Activated CD4-positive, alpha-beta T cell treated with anti-CD3 and anti-CD28 coated beads for 36 hours (primary cell): ENCODE measurements at regions of chrX and their contacts with region 1.

Region 1: GRCh38 chrX:70454441-70455365 is 10.1 kb downstream of the DLG3 start:
- DNase-seq: peak; percentile 82
- ATAC-seq: peak; percentile 65
- H3K4me3 Mint-ChIP-seq: peak overlapping the region; percentile 80
- H3K27ac Mint-ChIP-seq: peak overlapping the region; percentile 87
- H3K4me1 Mint-ChIP-seq: peaks cover 26% of the 10 kb centered on the region
- H3K27me3 Mint-ChIP-seq: no peaks in the 10 kb centered on the region

Region 2: DNA sequence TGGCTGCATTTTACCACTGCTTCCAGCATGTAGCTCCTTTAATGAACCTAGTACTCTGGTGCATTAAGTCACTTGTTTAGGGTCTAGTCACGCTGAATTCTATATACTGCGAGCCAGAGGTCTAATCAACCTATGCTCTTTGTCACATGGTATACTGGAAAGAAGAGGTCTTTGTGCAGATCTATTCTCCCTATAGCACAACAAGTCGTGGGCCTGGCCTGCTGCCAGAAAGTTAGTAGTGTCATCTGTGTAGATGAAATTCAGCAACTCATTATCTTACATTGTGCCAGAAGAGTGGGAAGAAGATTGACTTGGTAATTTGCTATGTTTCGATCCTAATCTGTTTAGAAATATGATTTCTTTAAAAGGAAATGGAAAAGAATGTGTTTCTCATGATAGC is 485.8 kb before region 1 on chrX:
- CTCF ChIA-PET with region 1: no interaction called
- POLR2A ChIA-PET with region 1: no interaction called
- intact Hi-C with region 1: no loop called
- DNase-seq: no peak
- ATAC-seq: no peak
- H3K4me3 Mint-ChIP-seq: no peak overlapping the region
- H3K27ac Mint-ChIP-seq: no peak overlapping the region
- H3K4me1 Mint-ChIP-seq: no peaks in the 10 kb centered on the region
- H3K27me3 Mint-ChIP-seq: no peaks in the 10 kb centered on the region

Region 3: GRCh38 chrX:70433848-70434351 is 20.8 kb before region 1 on chrX:
- CTCF ChIA-PET with region 1: interaction called, 4 read pairs
- POLR2A ChIA-PET with region 1: no interaction called
- intact Hi-C with region 1: loop called in 1 of 2 experiments (anchors 1 kb)
- DNase-seq: peak; percentile 86
- ATAC-seq: peak; percentile 80
- H3K4me3 Mint-ChIP-seq: peak overlapping the region; percentile 85
- H3K27ac Mint-ChIP-seq: peak overlapping the region; percentile 89
- H3K4me1 Mint-ChIP-seq: peaks cover 11% of the 10 kb centered on the region
- H3K27me3 Mint-ChIP-seq: peaks cover 14% of the 10 kb centered on the region

Region 4: GRCh38 chrX:70554081-70554480 is 99.4 kb after region 1 on chrX:
- CTCF ChIA-PET with region 1: no interaction called
- POLR2A ChIA-PET with region 1: no interaction called
- intact Hi-C with region 1: loop called (anchors 1 to 2 kb)
- DNase-seq: no peak
- ATAC-seq: no peak
- H3K4me3 Mint-ChIP-seq: no peak overlapping the region
- H3K27ac Mint-ChIP-seq: peak overlapping the region; percentile 6
- H3K4me1 Mint-ChIP-seq: peaks cover 10% of the 10 kb centered on the region
- H3K27me3 Mint-ChIP-seq: peaks cover 2% of the 10 kb centered on the region

Region 5: DNA sequence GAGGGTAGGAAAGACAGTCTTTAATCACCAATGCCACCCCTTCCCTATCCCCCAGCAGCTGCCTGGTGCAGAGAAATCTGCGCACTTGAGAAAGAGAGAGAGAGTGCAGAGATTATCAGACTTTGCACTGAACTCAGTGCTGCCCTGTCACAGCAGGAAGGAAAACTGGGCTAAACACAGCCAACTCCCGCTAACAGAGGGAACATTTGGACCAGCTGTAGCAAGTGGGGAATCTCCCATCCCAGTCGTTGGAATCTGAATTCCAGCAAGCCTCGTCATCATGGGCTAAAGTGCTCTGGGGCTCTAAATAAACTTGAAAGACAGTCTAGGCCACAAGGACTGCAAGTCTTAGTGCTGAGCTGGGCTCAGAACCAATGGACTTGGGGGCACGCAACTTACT is 158.6 kb after region 1 on chrX:
- CTCF ChIA-PET with region 1: no interaction called
- POLR2A ChIA-PET with region 1: no interaction called
- intact Hi-C with region 1: no loop called
- DNase-seq: no peak
- ATAC-seq: no peak
- H3K4me3 Mint-ChIP-seq: no peak overlapping the region
- H3K27ac Mint-ChIP-seq: no peak overlapping the region
- H3K4me1 Mint-ChIP-seq: peaks cover 2% of the 10 kb centered on the region
- H3K27me3 Mint-ChIP-seq: peaks cover 7% of the 10 kb centered on the region

Region 6: DNA sequence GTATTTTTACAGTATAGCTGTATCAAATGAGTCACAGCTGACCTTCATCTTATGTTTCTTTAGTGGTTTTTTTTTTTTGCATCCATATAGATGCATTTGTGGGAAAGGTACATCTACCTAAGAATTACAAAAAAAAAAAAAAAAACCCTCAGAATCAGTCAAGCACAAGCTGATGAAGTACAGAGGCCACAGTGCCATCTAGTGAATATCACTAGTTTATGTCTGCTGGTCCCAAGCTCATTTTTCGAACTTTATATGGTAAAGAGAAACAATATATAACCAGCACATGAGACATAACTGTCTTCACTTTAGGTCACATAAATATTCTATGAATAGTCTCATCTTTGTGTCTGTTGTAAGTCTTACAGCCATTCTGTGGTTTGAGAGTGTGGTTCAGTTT is 210.0 kb after region 1 on chrX:
- CTCF ChIA-PET with region 1: interaction called, 10 read pairs
- POLR2A ChIA-PET with region 1: no interaction called
- intact Hi-C with region 1: loop called (anchors 1 kb)
- DNase-seq: peak; percentile 9
- ATAC-seq: peak; percentile 81
- H3K4me3 Mint-ChIP-seq: no peak overlapping the region
- H3K27ac Mint-ChIP-seq: no peak overlapping the region
- H3K4me1 Mint-ChIP-seq: no peaks in the 10 kb centered on the region
- H3K27me3 Mint-ChIP-seq: peaks cover 2% of the 10 kb centered on the region

Region 7: DNA sequence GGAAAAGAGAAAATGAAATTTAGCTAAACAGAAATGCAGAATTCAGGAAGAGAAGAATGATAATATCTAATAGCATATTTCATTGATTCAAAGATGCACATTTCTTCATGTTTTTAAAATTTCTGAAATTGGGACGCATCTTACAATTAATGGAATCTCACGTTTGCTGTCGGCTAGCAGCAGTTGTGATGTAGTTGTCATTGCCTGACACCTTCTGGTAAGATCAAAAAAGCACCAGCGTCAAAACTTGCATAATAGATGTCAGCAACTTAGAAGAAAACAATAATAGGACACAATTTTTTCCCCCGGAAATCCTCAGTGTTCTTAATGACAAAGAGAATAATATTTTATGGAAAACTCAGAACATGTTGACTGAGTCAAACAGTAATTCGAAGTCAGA is 506.0 kb after region 1 on chrX:
- CTCF ChIA-PET with region 1: no interaction called
- POLR2A ChIA-PET with region 1: no interaction called
- intact Hi-C with region 1: loop called in 1 of 2 experiments (anchors 5 kb)
- DNase-seq: no peak
- ATAC-seq: no peak
- H3K4me3 Mint-ChIP-seq: no peak overlapping the region
- H3K27ac Mint-ChIP-seq: no peak overlapping the region
- H3K4me1 Mint-ChIP-seq: no peaks in the 10 kb centered on the region
- H3K27me3 Mint-ChIP-seq: peaks cover 4% of the 10 kb centered on the region